Colonic mucosa (tissue), 4 donors: ENCODE measurements at regions of chr1 and their contacts with region 1.

Region 1: DNA sequence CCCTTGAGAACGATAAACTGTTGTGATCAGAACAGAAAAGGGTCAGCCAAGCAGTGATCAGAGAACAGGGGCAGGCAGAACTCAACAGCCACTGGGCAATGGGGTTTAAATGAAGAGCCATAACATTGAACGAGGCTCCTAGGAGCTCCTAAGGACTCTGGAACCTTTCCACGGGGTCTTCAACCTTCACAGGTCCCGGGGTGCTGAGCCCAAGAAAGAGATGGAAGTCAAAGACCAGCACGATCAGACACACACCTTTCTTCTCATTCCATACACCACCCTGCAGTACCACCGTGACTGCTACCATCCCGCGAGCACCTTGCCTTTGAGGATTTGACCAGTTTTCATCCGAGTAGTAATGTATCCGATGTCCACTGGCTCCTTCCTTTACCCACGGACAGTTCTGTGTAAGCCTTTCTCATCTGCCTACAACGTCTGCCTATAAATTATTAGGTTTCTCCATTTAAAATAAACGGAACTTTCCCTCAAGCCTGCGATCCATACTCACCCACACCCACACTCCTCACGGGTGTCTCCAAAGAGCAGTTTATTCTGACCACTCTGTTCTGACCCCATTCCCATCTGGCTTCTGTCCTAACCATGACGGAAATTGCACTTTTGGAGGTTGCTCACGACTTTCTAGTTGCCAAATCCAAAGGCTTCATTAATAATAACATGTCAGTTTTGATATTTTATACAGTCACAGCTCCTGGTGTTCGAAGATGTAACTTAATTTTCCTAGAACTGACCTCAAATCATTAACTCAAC is 16.8 kb upstream of the HHAT start:
- DNase-seq: no peak
- H3K4me3 ChIP-seq: no peak overlapping the region
- H3K27ac ChIP-seq: no peak overlapping the region
- H3K4me1 ChIP-seq: no peaks in the 10 kb centered on the region
- H3K27me3 ChIP-seq: no peaks in the 10 kb centered on the region
- CTCF ChIP-seq: no peak

Region 2: GRCh38 chr1:209962856-209963255 is 349.1 kb before region 1 on chr1:
- intact Hi-C with region 1: no loop called
- DNase-seq: no peak
- H3K4me3 ChIP-seq: no peak overlapping the region
- H3K27ac ChIP-seq: no peak overlapping the region
- H3K4me1 ChIP-seq: no peaks in the 10 kb centered on the region
- H3K27me3 ChIP-seq: no peaks in the 10 kb centered on the region
- CTCF ChIP-seq: no peak

Region 3: DNA sequence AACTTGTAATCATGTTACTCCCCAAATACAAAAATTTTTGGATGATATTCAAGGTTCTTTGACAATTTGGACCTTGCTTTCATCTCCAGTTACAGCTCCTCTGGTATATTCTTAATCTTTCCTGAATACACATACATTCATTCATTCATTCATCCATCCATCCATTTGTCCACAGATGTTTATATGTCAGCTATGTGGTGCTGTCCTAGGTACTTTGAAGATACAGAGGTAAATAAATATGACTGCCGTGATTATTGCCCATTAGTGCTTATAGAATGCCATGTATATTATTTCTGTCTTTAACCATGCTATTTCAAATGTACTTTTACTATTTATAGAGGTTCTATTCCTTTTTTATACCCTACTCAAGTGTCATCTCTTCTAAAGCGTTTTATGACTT is 301.7 kb before region 1 on chr1:
- intact Hi-C with region 1: no loop called
- DNase-seq: no peak
- H3K4me3 ChIP-seq: no peak overlapping the region
- H3K27ac ChIP-seq: no peak overlapping the region
- H3K4me1 ChIP-seq: no peaks in the 10 kb centered on the region
- H3K27me3 ChIP-seq: no peaks in the 10 kb centered on the region
- CTCF ChIP-seq: no peak

Region 4: GRCh38 chr1:210143465-210144062 is 168.3 kb before region 1 on chr1:
- intact Hi-C with region 1: loop called (anchors 2 kb)
- DNase-seq: peak; percentile 80
- H3K4me3 ChIP-seq: no peak overlapping the region
- H3K27ac ChIP-seq: no peak overlapping the region
- H3K4me1 ChIP-seq: no peaks in the 10 kb centered on the region
- H3K27me3 ChIP-seq: no peaks in the 10 kb centered on the region
- CTCF ChIP-seq: peak; percentile 70

Region 5: GRCh38 chr1:210200124-210200736 is 111.7 kb before region 1 on chr1:
- intact Hi-C with region 1: loop called (anchors 5 kb)
- DNase-seq: no peak
- H3K4me3 ChIP-seq: no peak overlapping the region
- H3K27ac ChIP-seq: no peak overlapping the region
- H3K4me1 ChIP-seq: no peaks in the 10 kb centered on the region
- H3K27me3 ChIP-seq: no peaks in the 10 kb centered on the region
- CTCF ChIP-seq: no peak

Region 6: GRCh38 chr1:210373885-210374599 is 62.1 kb after region 1 on chr1:
- intact Hi-C with region 1: no loop called
- DNase-seq: peak; percentile 75
- H3K4me3 ChIP-seq: no peak overlapping the region
- H3K27ac ChIP-seq: no peak overlapping the region
- H3K4me1 ChIP-seq: no peaks in the 10 kb centered on the region
- H3K27me3 ChIP-seq: no peaks in the 10 kb centered on the region
- CTCF ChIP-seq: peak; percentile 66